ENCODE measurements at regions of chr3 and their contacts with region 1.

Region 1: DNA sequence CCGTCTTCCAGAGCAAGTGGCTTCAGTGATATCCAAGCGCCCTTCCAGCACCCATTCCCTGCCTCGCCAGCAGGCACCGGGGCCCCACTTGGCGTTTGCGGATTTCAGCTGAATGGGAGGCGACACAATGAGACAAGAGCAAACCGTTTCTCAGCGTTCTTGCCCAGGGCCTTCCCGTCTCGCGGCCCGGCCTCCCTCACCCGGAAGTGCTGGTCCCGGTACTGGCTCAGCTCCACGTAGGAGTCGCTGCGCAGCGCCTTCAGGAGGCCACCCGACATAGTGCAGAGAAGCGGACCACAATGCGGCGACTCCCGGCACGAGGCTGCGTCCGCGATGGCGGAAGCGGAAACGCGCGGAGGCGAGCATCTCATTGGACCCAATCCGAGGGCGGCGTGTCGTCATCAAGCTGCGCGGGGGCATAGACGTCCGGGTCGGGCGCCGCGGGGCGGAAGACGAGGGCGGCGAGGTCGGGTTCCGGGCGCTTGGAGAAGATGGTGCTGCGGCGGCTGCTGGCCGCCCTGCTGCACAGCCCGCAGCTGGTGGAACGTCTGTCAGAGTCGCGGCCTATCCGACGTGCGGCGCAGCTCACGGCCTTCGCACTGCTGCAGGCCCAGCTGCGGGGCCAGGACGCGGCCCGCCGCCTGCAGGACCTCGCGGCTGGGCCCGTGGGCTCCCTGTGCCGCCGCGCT is at the start of gene NCBP2:
- DNase-seq: peak; percentile 99
- ATAC-seq: peak; percentile 91
- H3K4me3 Mint-ChIP-seq: peak within 1 kb of the TSS; percentile 95
- H3K27ac Mint-ChIP-seq: peak within 1 kb of the TSS; percentile 95
- H3K4me1 Mint-ChIP-seq: peaks cover 57% of the 10 kb centered on the region
- H3K27me3 Mint-ChIP-seq: no peaks in the 10 kb centered on the region
- CTCF ChIP-seq: no peak
- total RNA-seq, gene NCBP2: 77.8 and 85.1 TPM in 2 replicates

Region 2: GRCh38 chr3:196432137-196432879 is 510.1 kb before region 1 on chr3 and contains the start of gene UBXN7:
- CTCF ChIA-PET with region 1: no interaction called
- POLR2A ChIA-PET with region 1: interaction called, 3 read pairs
- intact Hi-C with region 1: loop called (anchors 1 kb)
- DNase-seq: peak; percentile 92
- ATAC-seq: peak; percentile 81
- H3K4me3 Mint-ChIP-seq: peak within 1 kb of the TSS; percentile 96
- H3K27ac Mint-ChIP-seq: peak within 1 kb of the TSS; percentile 80
- H3K4me1 Mint-ChIP-seq: peaks cover 22% of the 10 kb centered on the region
- H3K27me3 Mint-ChIP-seq: no peaks in the 10 kb centered on the region
- CTCF ChIP-seq: no peak
- total RNA-seq, gene UBXN7: 60.8 and 66.5 TPM in 2 replicates

Region 3: GRCh38 chr3:196632046-196632751 is 310.2 kb before region 1 on chr3:
- CTCF ChIA-PET with region 1: no interaction called
- POLR2A ChIA-PET with region 1: interaction called, 3 read pairs
- intact Hi-C with region 1: loop called (anchors 5 kb)
- DNase-seq: peak; percentile 77
- ATAC-seq: peak; percentile 75
- H3K4me3 Mint-ChIP-seq: peak overlapping the region; percentile 93
- H3K27ac Mint-ChIP-seq: peak overlapping the region; percentile 96
- H3K4me1 Mint-ChIP-seq: peaks cover 66% of the 10 kb centered on the region
- H3K27me3 Mint-ChIP-seq: no peaks in the 10 kb centered on the region
- CTCF ChIP-seq: no peak

Region 4: GRCh38 chr3:196837819-196838420 is 104.5 kb before region 1 on chr3:
- CTCF ChIA-PET with region 1: interaction called, 5 read pairs
- POLR2A ChIA-PET with region 1: interaction called, 8 read pairs
- intact Hi-C with region 1: loop called (anchors 1 kb)
- DNase-seq: peak; percentile 36
- ATAC-seq: peak; percentile 93
- H3K4me3 Mint-ChIP-seq: no peak overlapping the region
- H3K27ac Mint-ChIP-seq: no peak overlapping the region
- H3K4me1 Mint-ChIP-seq: no peaks in the 10 kb centered on the region
- H3K27me3 Mint-ChIP-seq: no peaks in the 10 kb centered on the region
- CTCF ChIP-seq: no peak

Region 5: GRCh38 chr3:196962930-196963630 is 20.7 kb after region 1 on chr3:
- CTCF ChIA-PET with region 1: interaction called, 3 read pairs
- POLR2A ChIA-PET with region 1: interaction called, 14 read pairs
- intact Hi-C with region 1: loop called (anchors 1 kb)
- DNase-seq: no peak
- ATAC-seq: peak; percentile 53
- H3K4me3 Mint-ChIP-seq: peak overlapping the region; percentile 30
- H3K27ac Mint-ChIP-seq: peak overlapping the region; percentile 32
- H3K4me1 Mint-ChIP-seq: peaks cover 34% of the 10 kb centered on the region
- H3K27me3 Mint-ChIP-seq: no peaks in the 10 kb centered on the region
- CTCF ChIP-seq: no peak

Measured in activated B cell treated with CpG ODN at 0.5 μM for 24 hours (primary cell).